ENCODE measurements at regions of chrX and their contacts with region 1.

Region 1: DNA sequence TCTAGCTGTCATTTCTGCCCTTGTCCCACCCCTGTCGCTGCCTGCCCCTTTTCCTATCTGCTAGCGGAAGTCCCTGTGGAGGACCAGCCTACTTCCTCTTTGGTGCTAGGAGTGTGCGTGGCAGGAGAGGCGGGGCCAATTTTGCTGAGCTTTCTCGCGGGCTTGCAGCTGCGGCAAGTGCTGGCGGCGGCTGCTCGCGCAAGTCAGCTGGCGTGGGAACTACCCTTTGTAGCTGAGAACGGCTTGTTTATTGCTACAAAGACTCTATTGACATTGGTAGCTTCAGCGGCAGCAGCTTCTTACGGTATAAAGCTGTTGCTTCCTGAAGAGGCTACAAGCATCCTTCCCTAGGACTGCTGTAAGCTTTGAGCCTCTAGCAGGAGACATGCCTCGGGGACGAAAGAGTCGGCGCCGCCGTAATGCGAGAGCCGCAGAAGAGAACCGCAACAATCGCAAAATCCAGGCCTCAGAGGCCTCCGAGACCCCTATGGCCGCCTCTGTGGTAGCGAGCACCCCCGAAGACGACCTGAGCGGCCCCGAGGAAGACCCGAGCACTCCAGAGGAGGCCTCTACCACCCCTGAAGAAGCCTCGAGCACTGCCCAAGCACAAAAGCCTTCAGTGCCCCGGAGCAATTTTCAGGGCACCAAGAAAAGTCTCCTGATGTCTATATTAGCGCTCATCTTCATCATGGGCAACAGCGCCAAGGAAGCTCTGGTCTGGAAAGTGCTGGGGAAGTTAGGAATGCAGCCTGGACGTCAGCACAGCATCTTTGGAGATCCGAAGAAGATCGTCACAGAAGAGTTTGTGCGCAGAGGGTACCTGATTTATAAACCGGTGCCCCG is at the start of gene MAGEH1:
- DNase-seq: peak; percentile 81 to 96
- H3K4me3 ChIP-seq: peak within 1 kb of the TSS; percentile 60 to 68 (median 63)
- H3K27ac ChIP-seq: peak within 1 kb of the TSS; percentile 77 to 89 (median 86)
- H3K4me1 ChIP-seq: peaks cover 0 to 7% (median 0%) of the 10 kb centered on the region in 4 donors
- H3K27me3 ChIP-seq: no peaks in the 10 kb centered on the region
- CTCF ChIP-seq: no peak
- EP300 ChIP-seq: no peak
- POLR2A ChIP-seq: no peak
- total RNA-seq, gene MAGEH1: 1.8 to 31.8 (median 21.0) TPM in 4 of 5 donors, not detected in the other

Region 2: GRCh38 chrX:55312655-55313054 is 139.6 kb before region 1 on chrX:
- intact Hi-C with region 1: no loop called
- DNase-seq: no peak
- H3K4me3 ChIP-seq: no peak overlapping the region
- H3K27ac ChIP-seq: no peak overlapping the region
- H3K4me1 ChIP-seq: no peaks in the 10 kb centered on the region
- H3K27me3 ChIP-seq: peaks cover 0 to under 1% (median 0%) of the 10 kb centered on the region in 3 donors
- CTCF ChIP-seq: no peak
- EP300 ChIP-seq: no peak
- POLR2A ChIP-seq: no peak

Region 3: DNA sequence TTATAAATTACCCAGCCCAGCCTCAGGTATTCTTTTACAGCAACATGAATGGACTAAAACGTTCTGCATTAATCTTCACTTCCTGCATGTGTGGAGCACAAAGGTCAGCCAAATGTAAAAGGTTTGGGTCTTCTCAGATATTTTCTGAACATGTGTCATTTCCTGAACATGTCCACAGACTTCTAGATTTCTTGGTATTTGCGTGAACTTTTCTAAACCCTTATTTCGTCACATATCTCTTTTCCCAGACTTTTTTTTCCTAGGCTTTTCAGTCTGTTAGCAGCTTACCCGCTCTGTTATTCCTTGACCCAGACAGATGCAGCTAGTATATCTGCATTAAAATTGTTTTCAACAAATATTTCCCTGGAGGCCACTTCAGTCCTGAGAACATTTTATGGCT is 94.7 kb after region 1 on chrX:
- intact Hi-C with region 1: loop called (anchors 10 kb)
- DNase-seq: no peak
- H3K4me3 ChIP-seq: no peak overlapping the region
- H3K27ac ChIP-seq: no peak overlapping the region
- H3K4me1 ChIP-seq: no peaks in the 10 kb centered on the region
- H3K27me3 ChIP-seq: no peaks in the 10 kb centered on the region
- CTCF ChIP-seq: no peak
- EP300 ChIP-seq: no peak
- POLR2A ChIP-seq: no peak